ENCODE measurements at regions of chr1 and their contacts with region 1.

Region 1: GRCh38 chr1:84944767-84945486 is 51.9 kb upstream of the LPAR3 start:
- DNase-seq: peak; percentile 81
- H3K4me3 Mint-ChIP-seq: peak overlapping the region; percentile 74
- H3K27ac Mint-ChIP-seq: peak overlapping the region; percentile 92
- H3K4me1 Mint-ChIP-seq: peaks cover 14% of the 10 kb centered on the region
- H3K27me3 Mint-ChIP-seq: no peaks in the 10 kb centered on the region

Region 2: DNA sequence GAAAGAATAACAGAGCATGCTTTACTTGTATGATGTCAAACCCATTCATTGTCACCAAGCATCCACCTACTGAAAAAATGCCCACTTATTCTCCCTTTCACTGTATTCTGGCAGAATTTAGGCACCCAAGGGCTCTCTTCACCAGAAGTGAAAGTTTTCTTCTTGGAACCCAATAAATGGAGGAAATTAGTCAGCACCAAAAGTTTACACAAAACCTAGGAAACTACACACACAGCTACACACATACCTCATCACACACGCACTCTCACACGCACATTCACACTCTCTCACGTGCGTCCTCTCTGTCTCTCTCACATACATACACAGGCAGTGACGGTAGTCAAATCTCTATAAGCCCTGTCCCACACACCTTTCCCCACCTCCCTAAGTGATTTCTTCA is 14.4 kb after region 1 on chr1:
- CTCF ChIA-PET with region 1: interaction called, 43 read pairs
- intact Hi-C with region 1: loop called (anchors 1 kb)
- DNase-seq: peak; percentile 62
- H3K4me3 Mint-ChIP-seq: no peak overlapping the region
- H3K27ac Mint-ChIP-seq: no peak overlapping the region
- H3K4me1 Mint-ChIP-seq: peaks cover 7% of the 10 kb centered on the region
- H3K27me3 Mint-ChIP-seq: no peaks in the 10 kb centered on the region

Region 3: GRCh38 chr1:85033221-85033620 is 88.3 kb after region 1 on chr1:
- CTCF ChIA-PET with region 1: interaction called, 108 read pairs
- intact Hi-C with region 1: no loop called
- DNase-seq: no peak
- H3K4me3 Mint-ChIP-seq: no peak overlapping the region
- H3K27ac Mint-ChIP-seq: no peak overlapping the region
- H3K4me1 Mint-ChIP-seq: no peaks in the 10 kb centered on the region
- H3K27me3 Mint-ChIP-seq: peaks cover 5% of the 10 kb centered on the region

Region 4: GRCh38 chr1:85091671-85092280 is 146.8 kb after region 1 on chr1:
- CTCF ChIA-PET with region 1: interaction called, 3 read pairs
- intact Hi-C with region 1: loop called (anchors 1 kb)
- DNase-seq: peak; percentile 43
- H3K4me3 Mint-ChIP-seq: peak overlapping the region; percentile 66
- H3K27ac Mint-ChIP-seq: no peak overlapping the region
- H3K4me1 Mint-ChIP-seq: peaks cover 8% of the 10 kb centered on the region
- H3K27me3 Mint-ChIP-seq: peaks cover 2% of the 10 kb centered on the region

Region 5: DNA sequence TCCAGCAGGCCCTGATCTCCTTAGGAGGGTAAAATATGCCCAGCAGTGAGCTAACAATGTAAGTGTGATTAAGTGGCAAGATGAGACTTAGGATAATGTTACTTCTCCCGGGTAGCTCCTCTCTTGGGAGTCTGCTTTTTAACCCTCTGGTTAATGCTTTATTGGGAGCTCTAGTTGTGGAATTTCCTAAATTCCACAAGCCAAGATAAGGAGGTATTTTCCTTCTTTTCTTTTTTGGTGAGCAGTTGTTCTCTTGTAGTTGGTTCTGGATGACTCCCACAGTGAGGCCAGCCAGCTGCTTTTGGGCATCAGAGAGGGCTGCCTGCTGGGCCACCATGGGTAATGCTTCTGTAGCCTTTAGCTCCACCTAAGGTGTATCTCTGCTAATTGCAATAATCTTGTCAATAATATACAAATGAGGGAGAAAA is 295.3 kb after region 1 on chr1:
- CTCF ChIA-PET with region 1: interaction called, 24 read pairs
- intact Hi-C with region 1: loop called (anchors 1 kb)
- DNase-seq: peak; percentile 51
- H3K4me3 Mint-ChIP-seq: no peak overlapping the region
- H3K27ac Mint-ChIP-seq: no peak overlapping the region
- H3K4me1 Mint-ChIP-seq: peaks cover 14% of the 10 kb centered on the region
- H3K27me3 Mint-ChIP-seq: peaks cover 8% of the 10 kb centered on the region

Region 6: DNA sequence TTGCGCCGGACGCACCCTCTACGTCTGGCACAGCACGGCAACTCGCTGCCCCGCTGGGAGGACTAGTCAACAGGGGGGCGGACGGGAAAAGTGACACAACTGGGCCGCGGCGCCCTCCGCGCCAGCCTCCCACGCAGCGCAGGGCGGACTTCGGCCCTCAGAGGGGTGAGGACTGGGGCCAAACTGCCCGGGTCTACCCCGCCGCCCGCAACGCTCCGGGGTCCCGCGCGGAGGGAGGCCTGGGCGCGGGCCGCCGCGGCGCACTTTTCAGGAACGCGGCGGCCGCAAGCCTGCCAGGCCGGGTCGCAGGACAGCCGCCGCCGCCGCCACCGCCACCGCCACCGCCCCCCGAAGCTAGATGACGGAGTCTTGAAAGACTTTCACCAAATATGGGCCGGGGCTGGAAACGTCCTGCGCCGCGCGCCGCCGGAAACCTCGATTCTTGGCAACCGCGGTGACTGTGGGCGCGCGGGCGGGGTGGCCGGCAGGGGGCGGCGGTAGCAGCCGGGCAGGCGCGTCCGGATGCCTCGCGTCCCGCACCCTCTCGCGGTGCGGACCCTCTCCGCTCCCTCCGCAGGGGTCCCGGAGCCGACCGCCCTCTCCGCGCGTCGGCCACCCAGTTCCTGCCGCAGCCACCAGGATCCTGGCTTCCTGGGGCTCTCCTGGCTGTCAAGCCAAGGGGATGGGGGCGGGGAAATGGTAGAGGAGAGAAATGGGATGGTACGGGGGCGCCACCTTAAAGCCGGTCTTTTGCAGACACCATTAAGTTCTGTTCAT is 631.9 kb after region 1 on chr1:
- CTCF ChIA-PET with region 1: no interaction called
- intact Hi-C with region 1: loop called (anchors 2 kb)
- DNase-seq: peak; percentile 74
- H3K4me3 Mint-ChIP-seq: peak overlapping the region; percentile 63
- H3K27ac Mint-ChIP-seq: no peak overlapping the region
- H3K4me1 Mint-ChIP-seq: peaks cover 25% of the 10 kb centered on the region
- H3K27me3 Mint-ChIP-seq: peaks cover 74% of the 10 kb centered on the region